SK-N-SH (cell line): ENCODE measurements at regions of chr13 and their contacts with region 1.

Region 1: DNA sequence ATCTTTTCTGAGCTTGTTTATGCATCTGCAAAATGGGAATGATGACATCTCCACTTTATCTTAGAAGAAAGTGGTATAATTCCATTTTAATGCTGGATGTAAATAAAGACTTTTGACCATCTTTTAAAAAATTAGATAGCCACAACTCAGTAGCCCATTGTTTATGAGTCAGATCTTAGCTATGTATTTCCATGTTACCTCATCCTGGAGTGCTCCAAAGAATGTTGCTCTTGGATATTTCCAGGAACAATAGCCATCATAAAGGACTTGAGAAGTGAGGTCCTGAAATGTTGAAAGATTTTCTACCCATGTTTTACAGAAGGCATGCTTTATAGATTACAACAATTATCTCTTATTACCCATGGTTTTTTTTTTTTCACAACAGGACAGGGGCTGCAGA is 229.3 kb upstream of the EDNRB start:
- DNase-seq: no peak
- H3K4me3 ChIP-seq: no peak overlapping the region
- H3K27ac ChIP-seq: peak overlapping the region in 1 of 2 experiments; percentile 49; a peak in 1 of 4 replicates
- H3K4me1 ChIP-seq: peaks cover 0 to 11% of the 10 kb centered on the region in 2 experiments; a peak in 2 of 4 replicates
- H3K27me3 ChIP-seq: no peaks in the 10 kb centered on the region
- CTCF ChIP-seq: no peak
- EP300 ChIP-seq: peak in 1 of 2 experiments; percentile 78; a peak in 2 of 4 replicates
- RAD21 ChIP-seq: no peak

Region 2: DNA sequence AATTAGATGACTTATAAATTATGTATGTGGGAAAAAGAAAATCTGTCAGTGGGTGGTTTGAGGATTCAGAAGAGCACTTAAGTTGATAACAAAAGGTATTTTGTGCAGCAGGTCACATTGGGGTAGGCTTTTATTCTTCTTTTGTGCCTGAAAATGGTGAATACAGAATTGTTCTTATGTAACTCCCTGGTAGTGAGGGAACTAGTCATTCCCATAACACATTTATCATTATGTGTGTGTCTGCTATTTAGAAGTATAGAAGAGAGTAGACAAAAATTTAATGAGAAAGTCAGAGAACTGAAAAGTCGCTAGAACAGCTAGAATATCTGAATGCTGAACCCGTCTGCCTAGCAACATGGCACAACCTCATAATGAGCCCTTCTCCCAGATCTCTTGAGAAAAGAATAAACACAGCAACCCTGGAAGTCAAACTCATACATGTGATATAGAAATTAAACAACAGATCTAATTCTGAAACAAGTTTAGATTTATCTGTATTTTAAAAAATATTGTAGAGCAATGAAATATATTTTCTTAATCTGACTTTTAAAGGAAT is 117.5 kb before region 1 on chr13:
- CTCF ChIA-PET with region 1: no interaction called
- POLR2A ChIA-PET with region 1: no interaction called
- DNase-seq: no peak
- H3K4me3 ChIP-seq: no peak overlapping the region
- H3K27ac ChIP-seq: no peak overlapping the region
- H3K4me1 ChIP-seq: no peaks in the 10 kb centered on the region
- H3K27me3 ChIP-seq: no peaks in the 10 kb centered on the region
- CTCF ChIP-seq: no peak
- EP300 ChIP-seq: no peak
- RAD21 ChIP-seq: no peak

Region 3: DNA sequence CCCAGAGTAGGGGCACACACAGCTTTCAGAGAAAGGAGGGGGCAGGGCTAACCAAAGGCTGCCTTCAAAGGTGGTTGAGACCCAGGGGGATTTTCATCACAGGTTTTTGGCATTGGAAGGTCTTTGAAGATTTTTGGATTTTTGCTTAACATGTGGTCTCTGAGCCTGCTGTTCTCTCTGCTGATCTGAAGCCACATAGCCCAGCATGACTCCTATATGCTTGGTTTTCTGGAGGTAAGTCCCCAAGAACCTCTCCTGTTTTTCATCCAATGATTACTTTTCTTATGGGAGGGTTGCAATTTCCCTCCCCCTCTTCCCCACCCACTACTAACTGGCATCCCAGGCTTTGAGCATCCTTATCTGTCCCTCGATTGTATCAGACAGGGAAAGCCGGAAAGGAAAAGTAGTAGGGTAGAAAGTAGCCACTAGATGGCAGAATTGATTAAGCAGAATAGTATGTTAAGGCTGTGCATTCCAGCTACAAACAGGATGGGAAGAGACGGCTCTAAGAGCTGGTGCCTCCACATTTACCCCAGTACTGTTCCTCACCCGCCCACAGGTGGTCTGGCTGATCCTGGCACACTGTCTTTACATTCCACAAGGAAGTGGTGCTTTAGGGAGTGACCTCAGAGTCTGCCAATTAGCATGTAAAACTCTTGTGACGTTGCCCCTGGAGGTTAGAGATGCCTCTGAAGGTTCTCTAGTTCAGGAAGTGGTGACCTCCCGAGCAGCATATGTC is 10.3 kb before region 1 on chr13:
- CTCF ChIA-PET with region 1: interaction called, 15 read pairs
- POLR2A ChIA-PET with region 1: no interaction called
- DNase-seq: peak; percentile 59
- H3K4me3 ChIP-seq: peak overlapping the region in 1 of 2 experiments; percentile 9; a peak in 2 of 4 replicates
- H3K27ac ChIP-seq: no peak overlapping the region
- H3K4me1 ChIP-seq: peaks cover 0 to 11% of the 10 kb centered on the region in 2 experiments; a peak in 2 of 4 replicates
- H3K27me3 ChIP-seq: no peaks in the 10 kb centered on the region
- CTCF ChIP-seq: peak; percentile 84
- EP300 ChIP-seq: no peak
- RAD21 ChIP-seq: peak; percentile 86

Region 4: DNA sequence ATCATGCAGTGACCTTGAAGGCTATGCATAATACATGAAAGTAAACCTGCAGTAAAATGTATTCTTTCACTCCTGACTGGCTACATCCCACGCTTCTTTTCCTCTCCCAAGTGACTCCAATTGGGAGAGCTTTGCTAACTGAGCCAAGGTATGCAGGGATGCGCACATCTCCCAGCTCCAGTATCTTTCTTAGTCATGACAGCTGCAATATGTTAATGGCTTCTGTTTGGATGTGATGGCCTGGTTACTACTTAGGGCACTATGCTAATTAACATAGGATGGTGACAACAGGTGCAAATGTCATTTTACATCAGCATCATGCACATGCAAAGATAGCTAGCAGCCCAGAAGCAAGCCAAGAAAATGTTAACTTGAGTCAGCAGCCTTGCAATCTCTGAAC is 320.7 kb after region 1 on chr13:
- CTCF ChIA-PET with region 1: no interaction called
- POLR2A ChIA-PET with region 1: no interaction called
- DNase-seq: no peak
- H3K4me3 ChIP-seq: no peak overlapping the region
- H3K27ac ChIP-seq: no peak overlapping the region
- H3K4me1 ChIP-seq: no peaks in the 10 kb centered on the region
- H3K27me3 ChIP-seq: no peaks in the 10 kb centered on the region
- CTCF ChIP-seq: no peak
- EP300 ChIP-seq: no peak
- RAD21 ChIP-seq: no peak